ENCODE measurements at regions of chrX and their contacts with region 1.

Region 1: DNA sequence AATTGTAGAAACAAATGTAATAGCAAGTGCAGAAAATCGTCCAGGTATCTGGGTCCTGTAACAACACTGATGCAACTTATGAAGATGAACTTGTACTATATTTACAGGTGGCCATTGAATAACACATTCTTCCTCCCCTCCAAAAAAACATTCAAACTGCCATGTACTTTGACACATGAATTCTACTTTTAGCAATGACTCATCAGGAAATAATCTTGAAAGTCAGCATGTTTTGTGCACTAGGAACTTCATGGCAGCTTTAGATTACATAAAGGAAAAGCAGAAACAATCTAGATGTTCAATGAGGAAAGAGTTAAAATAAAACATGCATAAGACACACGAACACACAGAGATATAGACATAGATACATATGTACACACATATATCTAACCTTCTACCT is 2.5 kb downstream of the PABPC1L2A start:
- DNase-seq: no peak
- ATAC-seq: no peak
- H3K4me3 ChIP-seq: no peak overlapping the region
- H3K27ac ChIP-seq: no peak overlapping the region
- H3K4me1 ChIP-seq: no peaks in the 10 kb centered on the region
- H3K27me3 ChIP-seq: no peaks in the 10 kb centered on the region
- CTCF ChIP-seq: no peak
- POLR2A ChIP-seq: no peak
- RAD21 ChIP-seq: no peak

Region 2: GRCh38 chrX:72659723-72660122 is 417.1 kb before region 1 on chrX:
- CTCF ChIA-PET with region 1: no interaction called
- POLR2A ChIA-PET with region 1: no interaction called
- RAD21 ChIA-PET with region 1: no interaction called
- intact Hi-C with region 1: no loop called
- DNase-seq: no peak
- ATAC-seq: no peak
- H3K4me3 ChIP-seq: no peak overlapping the region
- H3K27ac ChIP-seq: no peak overlapping the region
- H3K4me1 ChIP-seq: no peaks in the 10 kb centered on the region
- H3K27me3 ChIP-seq: no peaks in the 10 kb centered on the region
- CTCF ChIP-seq: no peak
- POLR2A ChIP-seq: no peak
- RAD21 ChIP-seq: no peak

Region 3: DNA sequence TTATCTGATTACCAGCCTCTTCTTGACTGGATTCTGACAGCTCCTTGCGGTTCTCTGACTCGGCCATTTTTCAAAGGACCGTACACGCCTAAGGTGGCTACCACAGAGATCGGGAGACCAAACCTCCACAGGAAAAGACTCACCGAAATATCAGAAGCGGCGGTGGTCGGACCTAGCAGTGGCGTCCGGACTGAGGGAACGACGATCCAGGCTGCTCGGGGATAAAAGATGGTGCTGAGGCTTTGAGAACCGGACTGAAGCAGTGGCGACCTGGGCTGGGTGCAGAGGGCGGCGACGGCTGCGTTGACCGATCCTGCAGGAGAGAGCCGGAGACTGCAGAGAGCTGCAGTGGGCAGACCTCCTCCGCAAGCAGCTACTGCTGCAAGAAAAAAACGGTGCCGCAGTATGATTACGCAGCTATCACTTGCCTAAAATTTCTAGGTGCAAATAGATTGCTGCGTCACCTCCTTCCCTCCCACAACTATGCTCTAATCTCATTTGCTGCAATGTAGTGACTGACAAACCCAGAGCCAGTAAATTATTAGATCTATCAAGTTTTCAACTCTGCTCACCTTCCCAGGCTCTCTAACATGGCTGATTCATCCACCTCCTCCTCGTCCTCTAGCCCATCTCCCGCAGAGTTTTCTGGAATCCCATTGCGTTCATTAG is 137.7 kb after region 1 on chrX and contains the start of gene NAP1L2:
- CTCF ChIA-PET with region 1: no interaction called
- POLR2A ChIA-PET with region 1: no interaction called
- RAD21 ChIA-PET with region 1: no interaction called
- intact Hi-C with region 1: no loop called
- DNase-seq: no peak
- ATAC-seq: no peak
- H3K4me3 ChIP-seq: no peak within 1 kb of the TSS
- H3K27ac ChIP-seq: no peak within 1 kb of the TSS
- H3K4me1 ChIP-seq: no peaks in the 10 kb centered on the region
- H3K27me3 ChIP-seq: no peaks in the 10 kb centered on the region
- CTCF ChIP-seq: no peak
- POLR2A ChIP-seq: no peak
- RAD21 ChIP-seq: no peak
- total RNA-seq, gene NAP1L2: not detected

Region 4: GRCh38 chrX:74133156-74133796 is 1056.4 kb after region 1 on chrX:
- CTCF ChIA-PET with region 1: no interaction called
- POLR2A ChIA-PET with region 1: no interaction called
- RAD21 ChIA-PET with region 1: no interaction called
- intact Hi-C with region 1: loop called (anchors 10 kb)
- DNase-seq: peak; percentile 10
- ATAC-seq: peak; percentile 71
- H3K4me3 ChIP-seq: no peak overlapping the region
- H3K27ac ChIP-seq: no peak overlapping the region
- H3K4me1 ChIP-seq: no peaks in the 10 kb centered on the region
- H3K27me3 ChIP-seq: no peaks in the 10 kb centered on the region
- CTCF ChIP-seq: peak; percentile 35 to 63 (median 48); a peak in 5 of 6 replicates
- POLR2A ChIP-seq: no peak
- RAD21 ChIP-seq: peak; percentile 75

Measured in HCT116 (cell line).